Activated T-helper 2 cell treated with anti-CD3 and anti-CD28 coated beads, Interferon-gamma antibody, Interleukin-2, Interleukin-4, amounts not matched to agents 10 μg/mL and 5 μg/mL and 100 μg/mL, durations not matched to agents 14 hours and 24 hours and 36 hours (primary cell): ENCODE measurements at regions of chr2 and their contacts with region 1.

Region 1: DNA sequence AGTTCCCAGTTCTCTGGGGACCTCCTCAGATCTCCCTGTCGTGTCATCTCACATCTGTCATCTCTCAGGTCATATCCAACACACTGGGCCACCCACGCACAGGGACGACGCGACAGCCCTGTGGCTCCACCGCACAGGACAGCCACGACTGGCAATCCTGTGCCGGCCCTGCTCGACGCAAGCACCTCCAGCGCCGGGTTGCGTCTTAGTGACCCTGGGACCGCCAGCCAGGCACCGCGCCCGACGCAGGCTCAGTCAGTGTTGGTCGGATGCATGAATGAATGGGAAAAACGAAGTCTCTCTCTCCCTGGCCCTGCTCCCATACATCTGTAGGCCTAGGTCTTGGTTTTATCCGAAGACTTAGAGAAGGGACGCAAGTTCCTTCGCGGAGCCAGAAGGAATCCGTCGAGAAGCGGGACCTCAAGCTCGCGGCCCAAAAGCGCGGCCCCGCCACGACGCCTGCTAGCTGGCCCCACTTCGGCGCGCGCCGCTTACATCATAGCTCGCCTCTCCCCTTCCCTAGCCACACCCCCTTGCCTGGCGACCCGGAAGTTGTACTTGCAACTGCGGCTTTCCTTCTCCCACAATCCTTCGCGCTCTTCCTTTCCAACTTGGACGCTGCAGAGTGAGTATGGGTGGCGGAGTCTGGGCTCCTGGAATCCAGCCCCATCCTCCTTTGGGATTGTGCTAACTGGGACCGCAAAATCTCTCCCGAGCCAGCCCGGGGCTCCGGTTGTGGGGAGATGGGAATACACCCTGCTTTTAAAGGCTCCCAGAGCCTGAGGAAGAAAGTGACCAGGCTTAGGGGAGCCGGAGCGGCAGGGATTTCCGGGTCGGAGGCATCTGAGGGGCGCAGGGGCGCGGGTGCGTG is at the start of gene RPL31:
- DNase-seq: peak; percentile 94
- H3K4me3 Mint-ChIP-seq: peak within 1 kb of the TSS; percentile 97
- H3K27ac Mint-ChIP-seq: peak within 1 kb of the TSS; percentile 93
- H3K4me1 Mint-ChIP-seq: peaks cover 33% of the 10 kb centered on the region
- H3K27me3 Mint-ChIP-seq: peaks cover 5% of the 10 kb centered on the region
- total RNA-seq, gene RPL31: 1,195 and 1,243 TPM in 2 replicates

Region 2: DNA sequence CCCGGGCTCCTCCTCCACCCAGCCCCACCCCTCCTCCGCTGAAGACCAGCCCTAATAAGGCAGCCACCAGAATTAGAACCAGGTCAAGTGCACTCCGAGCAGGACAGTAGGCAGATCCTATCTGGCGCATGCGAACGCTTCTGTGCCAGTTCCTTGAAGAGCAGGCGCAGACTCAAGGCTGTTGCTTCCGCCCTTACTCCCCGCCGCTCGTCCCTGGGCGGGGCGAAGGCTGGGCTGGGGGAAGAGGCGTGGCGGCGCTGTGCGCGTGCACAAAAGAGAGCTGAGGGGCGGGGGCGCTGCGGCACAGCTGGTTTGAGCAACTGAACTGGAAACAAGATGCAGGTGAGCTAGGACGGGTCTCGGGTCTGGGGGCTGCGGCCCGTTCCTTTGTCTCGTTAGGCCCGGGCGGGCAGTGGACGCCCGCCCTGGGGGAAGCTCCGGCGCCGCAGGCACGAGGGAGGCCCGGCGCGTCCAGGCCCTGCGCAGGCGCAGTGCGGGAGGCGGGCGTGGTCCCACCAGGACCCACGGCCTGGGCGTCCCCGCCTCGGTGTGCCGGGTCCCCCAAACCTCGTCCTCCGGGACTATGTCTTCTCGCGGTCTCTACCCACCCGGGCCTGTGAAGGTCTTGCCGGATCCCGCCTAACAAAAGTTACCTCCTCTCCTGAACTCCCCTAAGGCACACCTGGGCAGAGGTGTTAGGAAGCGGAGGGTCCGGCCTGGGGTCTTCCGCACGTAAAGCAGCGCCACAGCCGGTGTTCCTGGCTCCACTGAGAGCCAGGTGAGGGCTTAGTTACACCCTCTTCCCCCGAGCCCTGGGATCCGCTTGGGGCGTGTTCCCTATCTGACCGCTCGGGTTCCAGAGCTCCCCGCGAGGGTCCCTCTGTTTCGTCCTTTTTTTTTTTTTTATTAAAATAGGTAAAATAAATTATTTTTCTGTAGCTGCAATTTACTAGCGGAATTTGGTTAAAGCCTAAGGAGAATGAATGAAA is 438.9 kb before region 1 on chr2 and contains the start of gene PDCL3:
- intact Hi-C with region 1: loop called (anchors 1 kb)
- DNase-seq: peak; percentile 94
- H3K4me3 Mint-ChIP-seq: peak within 1 kb of the TSS; percentile 88
- H3K27ac Mint-ChIP-seq: peak within 1 kb of the TSS; percentile 99
- H3K4me1 Mint-ChIP-seq: peaks cover 36% of the 10 kb centered on the region
- H3K27me3 Mint-ChIP-seq: no peaks in the 10 kb centered on the region
- total RNA-seq, gene PDCL3: 42.5 and 48.8 TPM in 2 replicates

Region 3: GRCh38 chr2:100606726-100607343 is 395.1 kb before region 1 on chr2:
- intact Hi-C with region 1: loop called (anchors 5 kb)
- DNase-seq: peak; percentile 21
- H3K4me3 Mint-ChIP-seq: no peak overlapping the region
- H3K27ac Mint-ChIP-seq: no peak overlapping the region
- H3K4me1 Mint-ChIP-seq: peaks cover 9% of the 10 kb centered on the region
- H3K27me3 Mint-ChIP-seq: peaks cover 4% of the 10 kb centered on the region

Region 4: GRCh38 chr2:100818606-100819369 is 183.1 kb before region 1 on chr2:
- intact Hi-C with region 1: loop called (anchors 5 kb)
- DNase-seq: no peak
- H3K4me3 Mint-ChIP-seq: peak overlapping the region; percentile 77
- H3K27ac Mint-ChIP-seq: peak overlapping the region; percentile 50
- H3K4me1 Mint-ChIP-seq: peaks cover 19% of the 10 kb centered on the region
- H3K27me3 Mint-ChIP-seq: peaks cover 46% of the 10 kb centered on the region

Region 5: GRCh38 chr2:101151141-101151858 is 149.4 kb after region 1 on chr2 and contains the start of gene TBC1D8:
- intact Hi-C with region 1: loop called (anchors 5 kb)
- DNase-seq: peak; percentile 59
- H3K4me3 Mint-ChIP-seq: peak within 1 kb of the TSS; percentile 68
- H3K27ac Mint-ChIP-seq: no peak within 1 kb of the TSS
- H3K4me1 Mint-ChIP-seq: peaks cover 14% of the 10 kb centered on the region
- H3K27me3 Mint-ChIP-seq: peaks cover 71% of the 10 kb centered on the region
- total RNA-seq, gene TBC1D8: 0.87 and 1.3 TPM in 2 replicates